Right ventricle myocardium superior (tissue), 1 donor: ENCODE measurements at regions of chr4 and their contacts with region 1.

Region 1: GRCh38 chr4:16026160-16026761 is 57.6 kb downstream of the PROM1 start:
- DNase-seq: no peak
- ATAC-seq: peak; percentile 56

Region 2: GRCh38 chr4:15971068-15971801 is 55.0 kb before region 1 on chr4:
- intact Hi-C with region 1: no loop called
- DNase-seq: no peak
- ATAC-seq: no peak

Region 3: DNA sequence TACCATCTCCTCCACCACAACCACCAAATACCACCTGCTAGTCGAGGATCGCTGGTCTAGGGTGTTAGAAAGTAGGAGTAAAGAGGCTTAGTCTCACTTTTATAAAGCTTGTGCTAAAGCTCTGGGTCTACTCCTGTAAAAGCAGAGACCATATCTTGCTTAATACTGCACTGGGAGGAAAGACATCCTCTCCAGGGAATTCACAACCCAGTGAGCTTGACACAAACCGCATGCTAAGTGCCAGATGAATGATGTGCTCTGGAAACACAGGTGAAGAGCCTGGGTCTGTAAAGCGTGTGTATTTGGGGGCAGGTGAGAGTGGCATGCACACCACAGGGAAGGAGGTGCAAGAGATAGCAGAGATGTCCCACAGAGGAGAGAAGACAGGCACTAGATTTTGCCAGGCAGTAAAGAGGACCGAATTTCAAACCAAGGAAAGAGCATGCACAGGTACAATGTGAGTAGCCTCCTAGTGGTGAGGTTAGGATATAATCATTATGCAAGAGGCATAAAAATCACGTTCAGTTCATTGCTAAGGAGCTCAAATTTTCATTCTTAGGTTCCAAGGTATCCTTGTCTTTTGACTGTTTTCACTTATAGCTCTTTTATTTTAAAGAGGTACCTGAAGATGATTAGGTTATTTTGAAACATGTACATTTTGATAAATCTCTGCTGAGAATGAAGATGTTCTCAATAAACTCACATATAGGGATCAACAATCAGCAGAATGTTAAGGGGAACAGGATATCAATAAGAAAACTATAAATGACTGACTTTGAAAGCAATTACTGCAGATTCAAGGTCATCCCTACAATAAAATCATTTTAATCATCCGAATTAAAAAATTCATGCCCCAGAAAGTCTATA is 179.3 kb after region 1 on chr4:
- intact Hi-C with region 1: loop called (anchors 10 kb)
- DNase-seq: no peak
- ATAC-seq: peak; percentile 54

Region 4: DNA sequence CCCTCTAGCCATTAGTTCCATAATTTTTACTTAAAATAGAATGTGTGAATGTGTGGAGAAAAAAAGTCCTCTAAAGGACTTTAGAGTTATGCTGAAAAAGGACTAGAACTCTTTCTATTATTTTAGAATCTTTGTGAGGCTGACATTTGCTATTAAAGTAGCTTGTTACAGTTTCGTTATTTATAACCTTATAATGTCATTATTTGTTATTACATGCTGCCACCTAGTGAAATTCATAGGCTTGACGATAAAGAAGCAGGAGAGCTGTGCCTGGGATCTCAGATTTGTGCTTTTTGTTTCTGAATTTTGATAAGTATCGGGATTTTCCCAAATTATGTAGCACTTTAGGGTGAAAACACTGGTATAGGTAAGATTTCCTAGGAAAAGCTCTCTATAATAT is 238.5 kb after region 1 on chr4:
- intact Hi-C with region 1: loop called (anchors 5 kb)
- DNase-seq: no peak
- ATAC-seq: peak; percentile 81